ENCODE measurements at regions of chr3 and their contacts with region 1.

Region 1: DNA sequence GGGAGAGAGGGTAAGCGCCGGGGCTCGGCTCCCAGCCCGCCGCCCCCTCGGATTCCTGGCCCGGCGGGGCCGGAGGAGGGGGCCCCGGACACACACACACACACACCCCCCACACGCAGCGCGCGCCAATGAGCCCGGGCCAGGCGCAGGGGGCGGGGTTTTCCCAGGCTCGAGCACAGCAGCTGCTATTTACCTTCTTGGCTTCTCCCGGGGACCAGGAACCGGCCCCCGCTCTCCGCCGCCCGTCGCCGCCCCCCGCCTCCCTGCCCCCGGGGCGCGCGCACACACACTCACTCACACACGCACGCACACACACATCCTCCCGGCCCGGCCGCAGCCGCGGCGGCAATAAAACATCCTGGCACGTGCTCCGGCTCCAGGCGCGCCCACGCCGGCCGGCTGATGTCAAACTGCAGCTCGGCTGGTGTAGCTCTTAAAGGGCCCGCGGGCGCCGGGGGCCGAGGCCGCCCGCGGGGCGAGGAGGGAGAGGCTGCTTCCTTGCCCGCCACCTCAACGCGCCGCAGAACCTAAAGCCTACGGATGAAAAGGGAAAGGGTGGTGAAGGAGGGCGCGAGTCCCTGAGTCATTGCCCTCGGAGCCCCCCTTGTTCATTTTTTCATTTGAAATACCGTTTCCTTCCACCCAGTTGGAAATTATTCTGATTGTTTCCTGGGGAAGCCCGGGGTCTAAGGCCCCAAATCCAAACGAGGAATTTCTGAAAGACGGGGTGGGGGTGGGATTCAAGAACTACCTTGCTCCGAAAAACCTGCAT is 1.0 kb upstream of the HES1 start:
- DNase-seq: peak; percentile 95
- ATAC-seq: peak; percentile 73

Region 2: GRCh38 chr3:193780810-193781472 is 354.0 kb before region 1 on chr3:
- intact Hi-C with region 1: loop called (anchors 2 kb)
- DNase-seq: peak; percentile 83
- ATAC-seq: peak; percentile 92

Region 3: GRCh38 chr3:193788189-193788991 is 346.6 kb before region 1 on chr3:
- intact Hi-C with region 1: loop called (anchors 2 kb)
- DNase-seq: peak; percentile 70
- ATAC-seq: peak; percentile 87

Region 4: DNA sequence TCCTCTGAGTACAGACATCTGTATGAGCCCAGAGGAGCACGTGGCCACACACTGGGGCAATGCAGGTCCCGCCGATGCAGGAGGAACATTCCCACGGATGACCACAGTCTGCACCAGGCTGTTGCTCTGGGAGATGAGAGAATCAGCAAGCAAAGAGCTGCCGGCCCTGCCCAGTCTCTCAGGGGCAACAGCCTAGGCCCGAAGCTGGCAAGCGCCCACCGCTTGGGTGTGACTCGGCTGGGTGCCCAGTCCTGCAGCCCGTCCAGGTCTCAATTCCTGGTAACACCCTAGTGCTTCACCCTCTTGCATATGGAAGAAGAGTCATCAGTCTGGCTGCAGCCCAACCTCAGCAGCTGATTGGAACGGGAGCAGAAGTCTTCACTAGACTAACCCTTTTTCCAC is 152.7 kb before region 1 on chr3:
- intact Hi-C with region 1: loop called (anchors 5 kb)
- DNase-seq: peak; percentile 83
- ATAC-seq: peak; percentile 60

Region 5: GRCh38 chr3:194003125-194004057 is 131.6 kb before region 1 on chr3:
- intact Hi-C with region 1: loop called (anchors 1 kb)
- DNase-seq: peak; percentile 94
- ATAC-seq: peak; percentile 91

Region 6: DNA sequence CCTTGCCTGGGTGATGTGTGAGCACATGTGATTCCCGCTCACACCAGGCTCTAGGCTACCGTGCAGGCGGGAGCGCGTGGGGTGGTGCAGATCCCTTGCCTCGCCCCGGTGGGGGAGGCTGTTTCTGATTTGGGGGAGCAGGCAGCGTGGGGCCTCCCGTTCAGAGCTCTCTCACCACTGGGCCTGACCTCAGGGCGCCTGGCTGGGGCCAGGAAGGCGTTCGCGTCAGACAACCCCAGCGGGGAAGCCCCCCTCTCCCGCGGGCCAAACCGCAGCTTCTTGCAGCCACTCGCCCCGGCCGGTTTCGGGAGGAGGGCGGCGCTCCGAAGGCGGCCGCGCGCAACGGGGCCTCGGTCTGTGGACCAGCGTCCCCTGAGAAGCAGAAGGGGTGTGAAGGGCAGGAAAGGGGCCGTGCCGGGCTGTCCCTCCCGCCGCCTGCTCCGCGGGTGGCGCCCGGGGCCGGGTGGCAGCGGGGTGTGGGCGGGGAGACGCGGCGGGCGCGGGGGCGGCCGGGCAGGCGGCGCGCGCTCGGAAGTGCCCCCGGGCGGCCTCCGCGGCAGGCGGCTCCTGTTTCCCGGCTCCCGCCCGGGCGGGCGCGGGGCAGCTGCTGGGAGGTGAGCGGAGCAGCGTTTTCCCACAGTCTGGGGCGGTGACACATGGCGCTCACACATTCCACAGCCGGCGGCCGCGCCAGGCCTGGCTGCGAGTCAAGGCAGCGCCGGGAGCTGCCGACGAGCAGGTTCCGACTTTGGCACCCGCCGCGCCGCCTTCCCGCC is 64.1 kb before region 1 on chr3:
- intact Hi-C with region 1: loop called (anchors 2 kb)
- DNase-seq: peak; percentile 92
- ATAC-seq: peak; percentile 89

Region 7: GRCh38 chr3:194095464-194095863 is 39.5 kb before region 1 on chr3:
- intact Hi-C with region 1: loop called (anchors 5 kb)
- DNase-seq: peak; percentile 82
- ATAC-seq: no peak